ENCODE measurements at regions of chr10 and their contacts with region 1.

Region 1: GRCh38 chr10:90912174-90912573 is 8.7 kb downstream of the ANKRD1 start:
- DNase-seq: no peak
- ATAC-seq: peak in 1 of 4 donors; percentile 2
- H3K4me3 ChIP-seq: no peak overlapping the region
- H3K27ac ChIP-seq: peak overlapping the region in 7 of 12 donors; percentile 1 to 36 (median 24)
- H3K4me1 ChIP-seq: peaks cover 0 to 6% (median 0%) of the 10 kb centered on the region in 12 donors
- H3K27me3 ChIP-seq: no peaks in the 10 kb centered on the region
- CTCF ChIP-seq: no peak
- POLR2A ChIP-seq: peak in 1 of 2 donors; percentile 30

Region 2: DNA sequence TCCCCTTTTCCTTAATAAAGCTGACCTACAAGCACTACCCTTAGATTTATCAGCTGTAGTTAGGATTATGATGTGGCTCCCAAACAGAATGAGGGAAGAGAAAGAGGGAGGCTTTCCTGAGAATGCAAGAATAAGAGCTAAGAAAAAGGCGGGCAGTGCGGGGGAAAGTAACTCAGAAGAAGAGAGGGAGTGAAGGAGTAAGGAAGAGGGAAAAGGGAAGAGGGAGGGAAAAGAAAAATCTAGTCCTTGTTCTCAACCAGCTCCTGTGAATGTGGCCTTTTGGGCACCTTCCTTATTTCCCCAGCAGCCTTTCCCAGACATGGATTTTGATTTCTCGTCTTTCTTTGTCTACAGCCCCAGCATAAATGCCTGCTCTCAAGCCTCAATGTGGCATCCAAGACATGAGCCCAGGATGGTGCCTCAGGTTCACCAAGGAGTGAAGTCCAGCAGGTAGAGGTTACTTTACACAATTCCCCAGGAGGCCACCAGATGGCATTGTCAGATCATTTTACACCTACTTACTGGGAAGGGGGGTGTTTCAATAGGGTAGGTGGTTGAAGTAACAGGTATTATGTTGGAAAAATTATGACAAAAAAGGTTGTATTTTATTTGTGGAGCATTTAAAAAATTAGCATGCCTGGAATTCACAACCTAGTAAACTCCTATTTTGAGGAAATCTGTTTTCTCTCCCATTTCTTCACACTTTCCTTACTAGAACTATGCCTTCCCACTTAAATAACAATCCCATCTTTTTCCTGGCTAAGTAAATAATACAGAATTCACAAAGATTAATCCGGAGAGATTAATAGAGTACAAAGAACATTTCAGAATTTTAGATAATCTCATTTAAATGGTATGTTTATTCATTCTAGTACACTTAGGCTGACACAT is 160.8 kb before region 1 on chr10:
- intact Hi-C with region 1: no loop called
- DNase-seq: no peak
- ATAC-seq: no peak
- H3K4me3 ChIP-seq: no peak overlapping the region
- H3K27ac ChIP-seq: no peak overlapping the region
- H3K4me1 ChIP-seq: no peaks in the 10 kb centered on the region
- H3K27me3 ChIP-seq: peaks cover 0 to 4% (median 0%) of the 10 kb centered on the region in 9 donors
- CTCF ChIP-seq: peak; percentile 43 to 66 (median 62)
- POLR2A ChIP-seq: no peak

Region 3: DNA sequence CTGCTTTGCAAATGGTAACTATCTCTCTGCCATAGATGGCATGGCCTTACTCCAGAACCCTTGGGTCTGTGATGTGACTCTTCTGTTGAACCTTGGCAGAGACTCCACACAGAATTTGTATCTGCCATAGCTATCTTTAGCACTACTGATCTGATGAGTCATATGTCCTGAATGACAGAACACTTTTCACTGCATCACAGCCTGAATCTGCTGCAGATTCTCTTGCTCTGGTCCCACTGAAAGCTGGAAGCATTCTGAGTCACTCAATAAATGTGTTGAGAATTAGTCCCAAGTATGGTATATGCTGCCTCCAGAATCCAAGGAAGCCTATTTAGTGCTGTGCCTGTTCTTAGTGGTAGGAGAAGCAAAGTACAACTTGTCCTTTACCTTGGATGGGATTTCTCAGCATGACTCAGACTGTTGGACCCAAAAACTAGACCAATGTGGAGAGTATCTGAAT is 48.2 kb after region 1 on chr10:
- intact Hi-C with region 1: loop called in 1 of 10 experiments (anchors 10 kb)
- DNase-seq: no peak
- ATAC-seq: peak in 3 of 4 donors; percentile 21 to 80 (median 75)
- H3K4me3 ChIP-seq: no peak overlapping the region
- H3K27ac ChIP-seq: peak overlapping the region in 4 of 12 donors; percentile 15 to 39 (median 38)
- H3K4me1 ChIP-seq: peaks cover under 1 to 25% (median 18%) of the 10 kb centered on the region in 12 donors
- H3K27me3 ChIP-seq: no peaks in the 10 kb centered on the region
- CTCF ChIP-seq: no peak
- POLR2A ChIP-seq: no peak

Region 4: DNA sequence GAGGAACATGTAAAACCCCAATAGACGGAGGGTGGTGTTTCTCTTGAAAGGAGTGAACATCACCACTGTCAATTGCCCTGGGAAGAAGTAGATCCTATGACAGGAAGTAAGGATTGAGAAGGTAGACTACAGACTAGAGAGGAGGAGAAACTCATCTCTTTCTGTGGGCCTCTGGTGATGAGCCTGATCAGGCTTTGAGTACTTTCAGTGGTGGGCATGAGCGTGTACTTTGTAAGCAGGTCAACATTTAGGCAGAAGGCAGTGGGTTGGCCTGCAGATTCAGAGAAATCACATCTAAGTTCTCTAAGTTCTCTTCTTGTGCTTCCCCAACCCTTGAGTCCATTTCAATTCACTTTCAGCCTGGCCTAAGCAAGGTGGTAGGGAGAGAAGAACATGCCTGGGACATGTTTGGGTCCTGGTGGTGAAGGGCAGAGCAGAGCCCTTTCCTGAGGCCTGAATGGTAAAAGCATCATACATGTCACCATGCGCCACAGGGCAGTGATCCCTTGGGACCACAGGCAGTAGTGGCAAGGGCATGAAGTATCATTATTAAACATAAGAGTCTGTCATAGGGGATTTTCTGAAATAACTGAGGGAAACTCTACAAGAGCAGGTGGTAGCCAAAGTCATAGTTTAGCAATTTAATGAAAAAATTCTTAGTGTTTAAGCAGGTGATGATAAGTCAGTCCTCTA is 65.1 kb after region 1 on chr10:
- intact Hi-C with region 1: no loop called
- DNase-seq: no peak
- ATAC-seq: no peak
- H3K4me3 ChIP-seq: no peak overlapping the region
- H3K27ac ChIP-seq: peak overlapping the region in 1 of 12 donors; percentile 2
- H3K4me1 ChIP-seq: no peaks in the 10 kb centered on the region
- H3K27me3 ChIP-seq: no peaks in the 10 kb centered on the region
- CTCF ChIP-seq: no peak
- POLR2A ChIP-seq: no peak